Activated T-helper 2 cell treated with anti-CD3 and anti-CD28 coated beads, Interferon-gamma antibody, Interleukin-2, Interleukin-4, amounts not matched to agents 10 μg/mL and 5 μg/mL and 100 μg/mL, durations not matched to agents 14 hours and 24 hours and 36 hours (primary cell): ENCODE measurements at regions of chr6 and their contacts with region 1.

Region 1: GRCh38 chr6:143536865-143537691 is 25.6 kb upstream of the FUCA2 start:
- DNase-seq: peak; percentile 61
- H3K4me3 Mint-ChIP-seq: peak overlapping the region; percentile 80
- H3K27ac Mint-ChIP-seq: peak overlapping the region; percentile 64
- H3K4me1 Mint-ChIP-seq: peaks cover 39% of the 10 kb centered on the region
- H3K27me3 Mint-ChIP-seq: no peaks in the 10 kb centered on the region

Region 2: GRCh38 chr6:143450453-143451371 is 86.4 kb before region 1 on chr6 and contains the starts of genes ADAT2 and PEX3:
- intact Hi-C with region 1: loop called (anchors 1 kb)
- DNase-seq: peak; percentile 93
- H3K4me3 Mint-ChIP-seq: peak within 1 kb of the TSS; percentile 94
- H3K27ac Mint-ChIP-seq: peak within 1 kb of the TSS; percentile 97
- H3K4me1 Mint-ChIP-seq: peaks cover 36% of the 10 kb centered on the region
- H3K27me3 Mint-ChIP-seq: no peaks in the 10 kb centered on the region
- total RNA-seq, gene ADAT2: 35.7 and 37.6 TPM in 2 replicates
- total RNA-seq, gene PEX3: 21.4 and 23.6 TPM in 2 replicates

Region 3: GRCh38 chr6:143516690-143517446 is 20.2 kb before region 1 on chr6:
- intact Hi-C with region 1: no loop called
- DNase-seq: no peak
- H3K4me3 Mint-ChIP-seq: no peak overlapping the region
- H3K27ac Mint-ChIP-seq: peak overlapping the region; percentile 15
- H3K4me1 Mint-ChIP-seq: peaks cover 20% of the 10 kb centered on the region
- H3K27me3 Mint-ChIP-seq: no peaks in the 10 kb centered on the region

Region 4: DNA sequence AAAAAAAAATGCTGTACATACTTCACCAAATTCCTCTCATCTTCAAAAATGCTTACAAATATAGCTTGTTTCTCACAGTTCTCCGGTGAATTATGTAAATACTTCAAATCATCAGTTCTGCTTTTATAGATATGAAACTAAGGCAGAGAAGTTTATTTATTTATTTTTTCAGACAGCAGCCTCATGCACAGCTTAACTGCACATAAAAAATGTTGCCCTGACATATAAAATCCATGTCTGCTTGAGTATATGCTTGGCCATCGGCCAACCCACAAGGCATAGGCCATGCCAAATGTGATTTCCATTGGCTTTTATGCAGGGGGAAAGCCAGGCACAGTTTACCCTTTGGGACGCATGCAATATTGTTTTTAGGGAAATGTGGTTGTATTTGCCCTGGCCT is 83.4 kb after region 1 on chr6:
- intact Hi-C with region 1: no loop called
- DNase-seq: no peak
- H3K4me3 Mint-ChIP-seq: no peak overlapping the region
- H3K27ac Mint-ChIP-seq: no peak overlapping the region
- H3K4me1 Mint-ChIP-seq: peaks cover 21% of the 10 kb centered on the region
- H3K27me3 Mint-ChIP-seq: peaks cover 6% of the 10 kb centered on the region